ENCODE measurements at regions of chr10 and their contacts with region 1.

Region 1: GRCh38 chr10:96287392-96288105 is 16.2 kb upstream of the BLNK start:
- DNase-seq: no peak
- H3K4me3 Mint-ChIP-seq: peak overlapping the region; percentile 22
- H3K27ac Mint-ChIP-seq: peak overlapping the region; percentile 53
- H3K4me1 Mint-ChIP-seq: peaks cover 40% of the 10 kb centered on the region
- H3K27me3 Mint-ChIP-seq: no peaks in the 10 kb centered on the region
- CTCF ChIP-seq: no peak

Region 2: GRCh38 chr10:96229568-96230030 is 58.0 kb before region 1 on chr10:
- CTCF ChIA-PET with region 1: interaction called, 55 read pairs
- intact Hi-C with region 1: no loop called
- DNase-seq: peak; percentile 75
- H3K4me3 Mint-ChIP-seq: peak overlapping the region; percentile 14
- H3K27ac Mint-ChIP-seq: peak overlapping the region; percentile 5
- H3K4me1 Mint-ChIP-seq: no peaks in the 10 kb centered on the region
- H3K27me3 Mint-ChIP-seq: no peaks in the 10 kb centered on the region
- CTCF ChIP-seq: peak; percentile 82

Region 3: DNA sequence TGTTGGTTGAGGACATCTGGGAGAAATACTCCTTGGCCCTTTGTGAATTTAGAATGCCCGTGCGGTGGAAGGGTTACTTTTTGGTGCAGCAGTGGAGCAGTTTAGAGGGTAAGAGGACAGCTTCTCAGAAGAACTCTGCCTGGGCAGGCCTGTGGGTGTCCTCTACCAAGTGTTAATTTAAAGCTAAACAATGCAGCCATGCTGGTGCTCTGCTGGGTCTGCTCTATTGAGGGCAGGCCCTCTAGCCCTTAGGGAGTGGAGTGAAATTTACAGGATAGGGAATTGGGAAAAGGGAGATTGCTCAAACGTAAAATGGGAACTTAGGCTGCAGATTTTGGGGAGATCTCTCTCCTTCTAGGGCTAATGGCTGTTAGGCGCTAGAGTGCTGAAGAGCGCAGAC is 38.3 kb before region 1 on chr10:
- CTCF ChIA-PET with region 1: no interaction called
- intact Hi-C with region 1: loop called (anchors 5 kb)
- DNase-seq: no peak
- H3K4me3 Mint-ChIP-seq: no peak overlapping the region
- H3K27ac Mint-ChIP-seq: peak overlapping the region; percentile 69
- H3K4me1 Mint-ChIP-seq: peaks cover 30% of the 10 kb centered on the region
- H3K27me3 Mint-ChIP-seq: no peaks in the 10 kb centered on the region
- CTCF ChIP-seq: no peak

Region 4: GRCh38 chr10:96358851-96359540 is 71.4 kb after region 1 on chr10 and contains the start of gene OPALIN:
- CTCF ChIA-PET with region 1: no interaction called
- intact Hi-C with region 1: no loop called
- DNase-seq: no peak
- H3K4me3 Mint-ChIP-seq: no peak within 1 kb of the TSS
- H3K27ac Mint-ChIP-seq: no peak within 1 kb of the TSS
- H3K4me1 Mint-ChIP-seq: no peaks in the 10 kb centered on the region
- H3K27me3 Mint-ChIP-seq: peaks cover 69% of the 10 kb centered on the region
- CTCF ChIP-seq: no peak
- total RNA-seq, gene OPALIN: not detected in 2 replicates